ENCODE measurements at regions of chr19 and their contacts with region 1.

Region 1: GRCh38 chr19:18571564-18572300 is at the start of gene UBA52:
- DNase-seq: peak; percentile 90 to 99 (median 92)
- ATAC-seq: peak; percentile 98
- H3K4me3 ChIP-seq: peak within 1 kb of the TSS; percentile 99
- H3K27ac ChIP-seq: peak within 1 kb of the TSS; percentile 90
- H3K4me1 ChIP-seq: peaks cover 12 to 42% of the 10 kb centered on the region in 2 experiments; a peak in 4 of 5 replicates
- H3K27me3 ChIP-seq: no peaks in the 10 kb centered on the region; a peak in 1 of 5 replicates
- CTCF ChIP-seq: peak in 2 of 3 experiments; percentile 1 to 4; a peak in 1 of 6 replicates
- EP300 ChIP-seq: peak; percentile 48; the same call in 1 of the 2 replicates
- POLR2A ChIP-seq: peak; percentile 98
- RAD21 ChIP-seq: no peak
- polyA plus RNA-seq, gene UBA52: 2,213 to 2,563 TPM

Region 2: DNA sequence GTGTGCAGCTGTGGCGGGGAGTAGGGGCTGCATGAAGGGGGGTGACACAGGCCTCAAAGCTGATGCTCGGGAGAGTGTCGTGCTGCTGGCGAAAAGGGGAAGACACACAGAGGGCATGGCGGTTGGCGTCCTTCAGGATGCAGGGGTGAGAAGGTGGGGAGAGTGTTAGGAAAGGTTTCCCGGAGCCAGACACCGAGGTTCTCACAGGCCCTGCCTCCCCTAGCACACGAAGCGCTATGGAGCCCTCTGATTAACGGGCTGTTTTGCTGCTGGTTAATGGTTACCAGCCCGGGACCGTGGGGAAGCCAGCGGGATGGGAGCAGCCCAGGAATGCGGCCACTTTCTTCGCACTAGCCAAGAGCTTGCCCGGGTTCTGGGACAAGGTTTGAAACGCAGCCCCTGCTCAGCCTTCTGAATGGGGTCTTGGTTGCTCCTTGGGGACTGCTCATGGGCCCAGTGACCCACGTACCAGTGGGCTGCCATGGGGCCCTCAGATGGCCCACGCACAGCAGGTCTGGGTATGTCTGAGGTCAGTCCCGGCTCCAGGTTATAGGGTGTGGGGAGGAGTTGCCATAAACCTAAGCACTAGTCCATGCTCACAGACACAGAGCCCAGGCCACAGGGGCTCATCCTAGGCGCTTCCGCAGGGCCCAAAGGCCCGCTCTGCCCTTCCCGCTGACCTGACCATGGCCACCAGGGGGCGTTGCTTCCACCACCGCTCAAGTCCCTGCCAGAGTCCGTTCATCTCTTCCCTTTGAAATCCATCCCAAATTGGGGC is 102.5 kb before region 1 on chr19:
- CTCF ChIA-PET with region 1: no interaction called
- POLR2A ChIA-PET with region 1: no interaction called
- in situ Hi-C with region 1: no loop called
- intact Hi-C with region 1: loop called (anchors 1 kb)
- DNase-seq: peak; percentile 76 to 85 (median 79)
- ATAC-seq: peak; percentile 93
- H3K4me3 ChIP-seq: no peak overlapping the region
- H3K27ac ChIP-seq: no peak overlapping the region
- H3K4me1 ChIP-seq: peaks cover 6 to 59% of the 10 kb centered on the region in 2 experiments; a peak in 4 of 5 replicates
- H3K27me3 ChIP-seq: no peaks in the 10 kb centered on the region
- CTCF ChIP-seq: peak; percentile 76 to 89 (median 87)
- EP300 ChIP-seq: no peak
- POLR2A ChIP-seq: no peak
- RAD21 ChIP-seq: peak; percentile 39 to 68

Region 3: DNA sequence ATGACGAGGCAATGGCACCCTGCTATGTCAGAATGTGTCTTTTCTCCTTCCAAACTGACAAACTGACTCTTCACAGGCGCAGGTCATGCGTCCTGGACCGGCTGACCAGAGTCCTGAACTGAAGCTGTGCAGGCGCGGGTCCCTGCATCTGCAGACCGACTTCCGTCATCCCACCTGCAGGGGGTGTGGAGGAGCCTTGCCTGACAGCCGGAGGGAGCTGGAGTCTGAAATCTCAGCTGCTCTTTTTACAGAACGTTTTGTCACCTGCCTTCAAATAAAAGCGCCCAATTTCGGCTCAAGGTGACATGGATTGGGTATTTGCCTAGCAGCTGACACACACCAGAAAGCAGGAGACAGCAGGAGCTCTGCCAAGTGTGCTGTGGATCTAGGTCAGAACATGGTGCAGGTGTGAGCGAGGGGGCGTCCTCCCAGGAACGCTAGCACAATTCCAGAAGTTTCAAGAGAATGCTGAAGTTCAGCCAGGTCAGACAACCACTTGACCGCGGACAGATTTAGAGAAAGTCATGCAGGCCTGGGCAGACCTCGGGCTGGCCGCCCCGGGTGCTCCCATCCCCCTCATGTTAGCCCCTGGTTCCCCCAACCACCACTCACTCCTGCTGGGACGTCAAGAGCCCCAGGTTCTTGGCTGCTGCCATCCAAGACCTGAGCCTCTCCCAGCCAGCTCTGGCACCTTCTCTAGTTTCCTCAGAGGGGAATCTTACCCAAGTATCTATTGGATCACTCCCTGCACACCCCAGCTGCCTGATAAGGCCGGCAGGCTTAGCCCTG is 82.7 kb before region 1 on chr19:
- CTCF ChIA-PET with region 1: no interaction called
- POLR2A ChIA-PET with region 1: interaction called, 3 read pairs
- in situ Hi-C with region 1: no loop called
- intact Hi-C with region 1: loop called (anchors 5 kb)
- DNase-seq: peak; percentile 55 to 68 (median 63)
- ATAC-seq: peak; percentile 69
- H3K4me3 ChIP-seq: no peak overlapping the region
- H3K27ac ChIP-seq: no peak overlapping the region
- H3K4me1 ChIP-seq: peaks cover 33 to 68% of the 10 kb centered on the region in 2 experiments
- H3K27me3 ChIP-seq: no peaks in the 10 kb centered on the region
- CTCF ChIP-seq: peak; percentile 59 to 67 (median 60)
- EP300 ChIP-seq: no peak
- POLR2A ChIP-seq: no peak
- RAD21 ChIP-seq: peak in 1 of 2 experiments; percentile 45; a peak in 3 of 4 replicates

Region 4: GRCh38 chr19:18542936-18543815 is 28.6 kb before region 1 on chr19 and contains the start of gene FKBP8:
- CTCF ChIA-PET with region 1: no interaction called
- POLR2A ChIA-PET with region 1: interaction called, 10 read pairs
- in situ Hi-C with region 1: no loop called
- intact Hi-C with region 1: no loop called
- DNase-seq: peak; percentile 94 to 97 (median 96)
- ATAC-seq: peak; percentile 97
- H3K4me3 ChIP-seq: peak within 1 kb of the TSS; percentile 68
- H3K27ac ChIP-seq: peak within 1 kb of the TSS; percentile 88
- H3K4me1 ChIP-seq: peaks cover 18 to 38% of the 10 kb centered on the region in 2 experiments
- H3K27me3 ChIP-seq: no peaks in the 10 kb centered on the region
- CTCF ChIP-seq: no peak
- EP300 ChIP-seq: no peak
- POLR2A ChIP-seq: no peak
- RAD21 ChIP-seq: no peak
- polyA plus RNA-seq, gene FKBP8: 0.46 to 1.0 TPM

Region 5: GRCh38 chr19:18557474-18558201 is 14.1 kb before region 1 on chr19 and contains the start of gene KXD1:
- CTCF ChIA-PET with region 1: no interaction called
- POLR2A ChIA-PET with region 1: interaction called, 49 read pairs
- in situ Hi-C with region 1: no loop called
- intact Hi-C with region 1: no loop called
- DNase-seq: peak; percentile 87 to 100 (median 95)
- ATAC-seq: peak; percentile 98
- H3K4me3 ChIP-seq: peak within 1 kb of the TSS; percentile 77
- H3K27ac ChIP-seq: peak within 1 kb of the TSS; percentile 81
- H3K4me1 ChIP-seq: peaks cover 8 to 23% of the 10 kb centered on the region in 2 experiments; a peak in 4 of 5 replicates
- H3K27me3 ChIP-seq: no peaks in the 10 kb centered on the region
- CTCF ChIP-seq: no peak
- EP300 ChIP-seq: no peak
- POLR2A ChIP-seq: peak; percentile 80
- RAD21 ChIP-seq: no peak
- polyA plus RNA-seq, gene KXD1: 21.9 to 41.3 TPM

Measured in K562 (cell line).